Left colon (tissue), 2 donors: ENCODE measurements at regions of chr15 and their contacts with region 1.

Region 1: GRCh38 chr15:81265944-81266775 is 57.8 kb downstream of the STARD5 start:
- DNase-seq: peak; percentile 69 to 90
- ATAC-seq: peak; percentile 96

Region 2: DNA sequence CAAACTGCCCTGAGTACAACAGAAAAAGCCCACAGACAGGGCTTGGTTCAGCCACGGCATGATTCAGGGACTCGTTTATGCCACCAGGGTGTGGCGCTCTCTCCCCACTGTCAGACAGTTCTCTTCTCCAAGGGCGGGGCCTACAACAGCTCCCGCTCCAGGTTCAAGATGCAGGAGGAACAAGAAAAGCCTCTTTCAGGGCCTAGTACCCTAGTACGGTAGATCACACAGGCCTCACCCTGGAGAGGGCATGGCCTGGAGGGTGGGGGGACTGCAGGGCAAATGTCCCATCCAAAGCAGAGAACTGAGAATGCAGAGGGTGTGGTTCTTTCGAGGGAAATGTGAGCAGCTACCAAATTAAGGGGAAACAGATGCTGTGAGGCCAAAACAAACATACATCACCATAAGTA is 288.5 kb before region 1 on chr15:
- intact Hi-C with region 1: loop called in 1 of 2 experiments (anchors 5 kb)
- DNase-seq: peak; percentile 56 to 81
- ATAC-seq: peak; percentile 98

Region 3: DNA sequence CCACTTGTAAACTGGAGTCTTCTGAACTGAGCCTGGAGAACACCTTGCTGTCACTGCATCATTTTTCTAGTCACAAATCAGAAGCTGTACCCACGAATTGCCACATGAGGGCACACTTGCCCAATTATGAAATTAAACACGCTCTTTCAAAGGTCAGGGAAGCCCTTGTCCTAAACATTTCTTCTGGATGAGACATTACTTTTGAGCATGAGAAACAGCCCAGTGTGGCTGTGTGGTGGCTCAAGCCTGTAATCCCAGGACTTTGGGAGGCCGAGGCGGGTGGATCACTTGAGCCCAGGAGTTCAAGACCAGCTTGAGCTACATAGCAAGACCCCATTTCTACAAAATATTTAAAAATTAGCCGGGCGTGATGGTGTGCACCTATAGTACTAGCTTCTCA is 159.6 kb before region 1 on chr15:
- intact Hi-C with region 1: loop called in 1 of 2 experiments (anchors 5 kb)
- DNase-seq: peak in 1 of 2 donors; percentile 37
- ATAC-seq: peak; percentile 67

Region 4: DNA sequence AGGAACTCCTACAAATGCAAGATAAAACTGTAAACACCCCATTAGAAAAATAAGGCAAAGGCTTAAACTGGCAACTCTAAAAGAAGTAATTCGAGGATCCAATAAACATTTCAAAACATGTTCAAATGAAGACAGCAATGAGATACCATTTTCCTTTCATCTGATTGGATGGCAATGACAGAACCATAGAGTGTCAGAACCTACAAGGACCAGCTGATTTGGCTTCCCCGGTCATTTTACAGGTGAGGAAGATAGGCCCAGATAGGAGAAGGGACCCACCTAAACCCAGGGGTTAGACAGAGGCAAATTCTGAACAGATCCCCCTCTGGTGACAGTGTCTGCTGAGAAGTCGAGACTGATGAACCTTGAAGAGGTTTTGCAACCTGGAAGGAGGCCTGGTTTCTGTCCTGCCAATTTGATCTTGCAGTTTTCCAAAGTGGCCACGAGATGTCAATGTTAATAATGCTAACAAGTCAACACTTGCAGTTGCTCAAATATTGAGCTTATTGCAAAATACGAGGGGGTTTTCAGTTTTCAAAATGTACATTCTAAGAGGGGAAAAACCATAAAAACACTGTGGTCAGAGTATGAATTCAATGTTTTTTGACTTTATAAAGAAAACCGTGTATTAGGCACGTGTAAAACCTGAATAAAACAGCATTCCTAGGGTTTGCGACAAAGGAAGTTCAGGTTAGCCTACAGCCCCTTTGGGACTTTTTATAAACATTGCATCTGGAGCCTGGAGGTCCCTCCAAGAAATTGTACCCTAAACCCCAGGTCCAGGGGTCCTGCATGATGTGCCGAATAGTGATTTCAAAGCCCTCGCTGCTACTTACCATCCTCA is 110.6 kb before region 1 on chr15:
- intact Hi-C with region 1: loop called (anchors 5 to 10 kb)
- DNase-seq: no peak
- ATAC-seq: peak; percentile 50